ENCODE measurements at regions of chr9 and their contacts with region 1.

Region 1: GRCh38 chr9:101533334-101534107 is at the start of gene RNF20:
- DNase-seq: peak; percentile 97 to 100 (median 99)
- ATAC-seq: peak; percentile 90 to 92
- H3K4me3 Mint-ChIP-seq: peak within 1 kb of the TSS; percentile 90 to 97 (median 94)
- H3K27ac Mint-ChIP-seq: peak within 1 kb of the TSS; percentile 94 to 100 (median 99)
- H3K4me1 Mint-ChIP-seq: peaks cover 11 to 32% (median 24%) of the 10 kb centered on the region in 4 donors
- H3K27me3 Mint-ChIP-seq: peaks cover 0 to 14% (median 5%) of the 10 kb centered on the region in 5 donors
- polyA plus RNA-seq, gene RNF20: 30.6 to 48.2 (median 43.6) TPM

Region 2: GRCh38 chr9:101443364-101443771 is 90.2 kb before region 1 on chr9:
- POLR2A ChIA-PET with region 1: no interaction called
- DNase-seq: no peak
- ATAC-seq: no peak
- H3K4me3 Mint-ChIP-seq: no peak overlapping the region
- H3K27ac Mint-ChIP-seq: no peak overlapping the region
- H3K4me1 Mint-ChIP-seq: peaks cover 0 to 1% (median under 1%) of the 10 kb centered on the region in 4 donors
- H3K27me3 Mint-ChIP-seq: peaks cover 32 to 80% (median 54%) of the 10 kb centered on the region in 5 donors

Region 3: GRCh38 chr9:101569741-101570501 is 36.4 kb after region 1 on chr9:
- POLR2A ChIA-PET with region 1: interaction called, 10 read pairs
- DNase-seq: peak in 7 of 10 donors; percentile 30 to 91 (median 68)
- ATAC-seq: peak; percentile 91 to 94
- H3K4me3 Mint-ChIP-seq: peak overlapping the region; percentile 50 to 83 (median 70)
- H3K27ac Mint-ChIP-seq: peak overlapping the region; percentile 94 to 99 (median 96)
- H3K4me1 Mint-ChIP-seq: peaks cover 53 to 79% (median 77%) of the 10 kb centered on the region in 4 donors
- H3K27me3 Mint-ChIP-seq: no peaks in the 10 kb centered on the region

Measured in naive thymus-derived CD8-positive, alpha-beta T cell (primary cell).